Mammary epithelial cell (primary cell): ENCODE measurements at regions of chr2 and their contacts with region 1.

Region 1: GRCh38 chr2:172555522-172556283 is at the start of gene PDK1:
- DNase-seq: peak; percentile 92
- H3K4me3 ChIP-seq: peak within 1 kb of the TSS; percentile 84 to 94 (median 94)
- H3K27ac ChIP-seq: peak within 1 kb of the TSS; percentile 98
- H3K4me1 ChIP-seq: peaks cover 45% of the 10 kb centered on the region
- H3K27me3 ChIP-seq: no peaks in the 10 kb centered on the region
- CTCF ChIP-seq: no peak
- total RNA-seq, gene PDK1: 13.8 to 34.0 TPM

Region 2: GRCh38 chr2:172507199-172507598 is 48.5 kb before region 1 on chr2:
- CTCF ChIA-PET with region 1: no interaction called
- dilution Hi-C with region 1: loop called (anchors 10 kb)
- in situ Hi-C with region 1: no loop called
- intact Hi-C with region 1: loop called (anchors 5 kb)
- DNase-seq: no peak
- H3K4me3 ChIP-seq: no peak overlapping the region
- H3K27ac ChIP-seq: no peak overlapping the region
- H3K4me1 ChIP-seq: no peaks in the 10 kb centered on the region
- H3K27me3 ChIP-seq: no peaks in the 10 kb centered on the region
- CTCF ChIP-seq: no peak

Region 3: DNA sequence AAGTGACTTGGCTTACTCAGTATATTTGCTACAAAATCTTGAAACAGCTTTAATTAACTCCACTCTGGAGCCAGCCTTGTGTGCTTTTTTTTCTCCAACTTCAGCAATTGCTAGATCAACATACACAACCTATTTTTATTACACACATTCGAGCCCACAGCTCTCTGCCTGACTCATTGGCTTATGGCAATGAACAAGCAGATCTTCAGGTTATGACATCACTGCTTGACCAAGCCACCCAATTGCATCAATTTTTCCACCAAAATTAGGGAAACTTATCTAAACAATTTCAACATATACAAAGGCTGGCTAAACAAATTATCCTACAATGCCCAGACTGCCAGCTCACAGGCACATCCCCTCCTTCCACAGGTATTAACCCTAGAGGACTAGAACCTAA is 39.4 kb before region 1 on chr2:
- CTCF ChIA-PET with region 1: no interaction called
- dilution Hi-C with region 1: no loop called
- in situ Hi-C with region 1: no loop called
- intact Hi-C with region 1: loop called (anchors 5 kb)
- DNase-seq: peak; percentile 69
- H3K4me3 ChIP-seq: no peak overlapping the region
- H3K27ac ChIP-seq: no peak overlapping the region
- H3K4me1 ChIP-seq: no peaks in the 10 kb centered on the region
- H3K27me3 ChIP-seq: no peaks in the 10 kb centered on the region
- CTCF ChIP-seq: no peak